A673 (cell line): ENCODE measurements at regions of chr12 and their contacts with region 1.

Region 1: GRCh38 chr12:46372544-46373110 is at the start of gene SLC38A2:
- DNase-seq: peak; percentile 96
- H3K4me3 ChIP-seq: peak within 1 kb of the TSS; percentile 82
- H3K27ac ChIP-seq: peak within 1 kb of the TSS; percentile 99
- H3K4me1 ChIP-seq: peaks cover 36% of the 10 kb centered on the region
- H3K27me3 ChIP-seq: no peaks in the 10 kb centered on the region
- CTCF ChIP-seq: no peak
- total RNA-seq, gene SLC38A2: 395 and 440 TPM in 2 replicates

Region 2: GRCh38 chr12:46473634-46474329 is 101.2 kb after region 1 on chr12:
- CTCF ChIA-PET with region 1: no interaction called
- POLR2A ChIA-PET with region 1: no interaction called
- intact Hi-C with region 1: loop called (anchors 5 kb)
- DNase-seq: peak; percentile 95
- H3K4me3 ChIP-seq: no peak overlapping the region
- H3K27ac ChIP-seq: peak overlapping the region; percentile 89
- H3K4me1 ChIP-seq: peaks cover 37% of the 10 kb centered on the region
- H3K27me3 ChIP-seq: no peaks in the 10 kb centered on the region
- CTCF ChIP-seq: no peak

Region 3: DNA sequence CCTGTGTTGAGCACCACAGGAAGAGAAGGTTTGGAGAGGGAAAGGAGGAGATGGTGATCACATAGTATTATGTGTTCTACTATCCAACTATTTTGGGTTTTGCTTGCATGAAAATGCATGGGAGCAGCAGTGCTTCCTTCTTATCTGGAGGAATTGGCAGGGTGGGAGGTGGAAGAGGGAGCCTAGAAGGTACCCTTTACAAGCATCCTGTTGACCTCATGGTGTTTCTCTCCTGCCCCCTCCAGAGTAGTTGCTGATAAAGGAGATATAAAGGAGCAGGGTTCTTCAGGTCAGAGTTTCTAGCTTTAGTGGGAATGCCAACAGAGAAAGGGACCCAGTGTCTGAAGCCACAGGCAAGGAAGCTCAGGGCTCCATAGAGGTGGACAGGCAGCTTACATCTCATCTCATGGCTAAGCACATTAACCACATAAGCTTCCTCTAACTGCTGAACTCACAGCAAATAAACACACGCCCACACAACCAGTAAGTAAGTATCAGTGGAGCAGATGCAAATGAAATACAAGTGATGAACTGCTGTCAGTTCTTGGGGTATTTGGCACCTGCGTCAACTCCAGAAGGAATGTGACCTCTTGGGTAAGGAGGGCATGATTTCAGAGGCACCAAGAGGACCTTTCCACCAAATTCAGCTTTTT is 174.1 kb after region 1 on chr12:
- CTCF ChIA-PET with region 1: no interaction called
- POLR2A ChIA-PET with region 1: interaction called, 4 read pairs
- intact Hi-C with region 1: loop called (anchors 2 kb)
- DNase-seq: peak; percentile 64
- H3K4me3 ChIP-seq: no peak overlapping the region
- H3K27ac ChIP-seq: peak overlapping the region; percentile 87
- H3K4me1 ChIP-seq: peaks cover 54% of the 10 kb centered on the region
- H3K27me3 ChIP-seq: no peaks in the 10 kb centered on the region
- CTCF ChIP-seq: no peak